Heart right ventricle (tissue), 16 donors: ENCODE measurements at regions of chr10 and their contacts with region 1.

Region 1: GRCh38 chr10:70758757-70759514 is 26.2 kb downstream of the TBATA start:
- DNase-seq: peak in 1 of 2 donors; percentile 85
- ATAC-seq: peak; percentile 20 to 78 (median 66)
- H3K4me3 ChIP-seq: no peak overlapping the region
- H3K27ac ChIP-seq: no peak overlapping the region
- H3K4me1 ChIP-seq: peaks cover 0 to 21% (median 13%) of the 10 kb centered on the region in 9 donors
- H3K27me3 ChIP-seq: no peaks in the 10 kb centered on the region
- CTCF ChIP-seq: peak; percentile 61 to 85 (median 77)

Region 2: DNA sequence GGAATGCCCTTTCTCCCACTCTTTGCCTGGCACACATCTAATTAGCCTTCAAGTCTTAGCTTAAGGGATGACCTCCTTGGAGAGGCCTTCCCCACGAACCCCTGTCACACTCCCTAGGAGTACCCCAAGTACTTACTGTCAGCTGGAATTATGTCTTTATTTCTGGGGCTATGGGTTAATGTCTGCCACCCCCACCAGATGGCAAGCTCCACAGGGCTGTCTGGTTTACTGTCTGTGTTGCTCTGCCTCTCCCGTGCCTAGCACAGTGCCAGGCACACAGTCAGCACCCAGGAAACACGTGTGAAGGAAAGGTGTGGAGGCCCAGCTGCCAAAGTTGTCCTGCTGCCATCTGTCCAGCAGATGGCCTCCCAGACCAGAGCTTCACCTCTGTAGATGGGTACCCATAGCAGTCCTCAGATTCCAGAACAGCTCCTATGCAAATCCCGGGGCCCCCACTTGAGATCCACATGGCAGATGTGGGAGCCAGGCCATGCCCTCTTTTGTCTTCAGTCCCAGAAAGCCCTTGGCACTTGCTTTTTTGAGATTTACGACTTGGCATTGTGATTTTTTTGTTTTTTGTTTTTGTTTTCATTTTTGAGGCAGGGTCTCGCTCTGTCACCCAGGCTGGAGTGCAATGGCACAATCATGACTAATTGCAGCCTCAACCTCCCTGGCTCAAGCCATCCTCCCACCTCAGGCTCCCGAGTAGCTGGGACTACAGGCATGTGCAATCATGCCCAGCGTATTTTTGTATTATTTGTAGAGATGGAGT is 297.5 kb before region 1 on chr10:
- intact Hi-C with region 1: loop called (anchors 2 to 10 kb)
- DNase-seq: peak; percentile 52 to 56
- ATAC-seq: peak; percentile 42 to 73 (median 54)
- H3K4me3 ChIP-seq: no peak overlapping the region
- H3K27ac ChIP-seq: peak overlapping the region in 1 of 10 donors; percentile 7
- H3K4me1 ChIP-seq: peaks cover 16 to 56% (median 37%) of the 10 kb centered on the region in 9 donors
- H3K27me3 ChIP-seq: peaks cover 0 to 34% (median 0%) of the 10 kb centered on the region in 7 donors
- CTCF ChIP-seq: peak; percentile 82 to 95 (median 88)

Region 3: DNA sequence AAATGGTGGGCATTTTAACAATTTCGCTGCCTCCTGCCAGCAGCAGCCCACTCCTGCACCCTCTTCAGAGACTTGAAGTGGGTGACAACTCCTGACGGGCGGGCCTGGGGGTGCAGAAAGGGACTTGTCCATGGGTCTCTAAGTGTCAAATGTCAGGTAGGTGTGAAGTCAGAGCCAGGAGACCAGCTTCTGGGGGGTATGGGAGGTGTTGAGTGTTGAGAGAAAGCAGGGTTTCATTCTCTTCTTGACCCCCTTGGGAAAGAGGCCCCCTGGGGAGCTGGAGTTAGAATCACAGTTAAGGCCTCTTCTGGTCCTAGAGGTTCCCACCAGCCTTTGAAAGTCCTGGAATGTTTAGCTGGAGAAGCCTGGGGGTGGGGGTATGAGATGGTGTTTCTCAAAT is 292.0 kb before region 1 on chr10:
- intact Hi-C with region 1: loop called in 9 of 10 experiments (anchors 2 to 10 kb)
- DNase-seq: no peak
- ATAC-seq: no peak
- H3K4me3 ChIP-seq: no peak overlapping the region
- H3K27ac ChIP-seq: no peak overlapping the region
- H3K4me1 ChIP-seq: peaks cover 12 to 34% (median 20%) of the 10 kb centered on the region in 9 donors
- H3K27me3 ChIP-seq: no peaks in the 10 kb centered on the region
- CTCF ChIP-seq: no peak

Region 4: GRCh38 chr10:70549962-70550458 is 208.9 kb before region 1 on chr10:
- intact Hi-C with region 1: loop called (anchors 1 to 5 kb)
- DNase-seq: peak; percentile 62 to 67
- ATAC-seq: peak; percentile 58 to 78 (median 70)
- H3K4me3 ChIP-seq: no peak overlapping the region
- H3K27ac ChIP-seq: no peak overlapping the region
- H3K4me1 ChIP-seq: peaks cover 0 to 24% (median 0%) of the 10 kb centered on the region in 9 donors
- H3K27me3 ChIP-seq: no peaks in the 10 kb centered on the region
- CTCF ChIP-seq: peak; percentile 85 to 97 (median 90)

Region 5: DNA sequence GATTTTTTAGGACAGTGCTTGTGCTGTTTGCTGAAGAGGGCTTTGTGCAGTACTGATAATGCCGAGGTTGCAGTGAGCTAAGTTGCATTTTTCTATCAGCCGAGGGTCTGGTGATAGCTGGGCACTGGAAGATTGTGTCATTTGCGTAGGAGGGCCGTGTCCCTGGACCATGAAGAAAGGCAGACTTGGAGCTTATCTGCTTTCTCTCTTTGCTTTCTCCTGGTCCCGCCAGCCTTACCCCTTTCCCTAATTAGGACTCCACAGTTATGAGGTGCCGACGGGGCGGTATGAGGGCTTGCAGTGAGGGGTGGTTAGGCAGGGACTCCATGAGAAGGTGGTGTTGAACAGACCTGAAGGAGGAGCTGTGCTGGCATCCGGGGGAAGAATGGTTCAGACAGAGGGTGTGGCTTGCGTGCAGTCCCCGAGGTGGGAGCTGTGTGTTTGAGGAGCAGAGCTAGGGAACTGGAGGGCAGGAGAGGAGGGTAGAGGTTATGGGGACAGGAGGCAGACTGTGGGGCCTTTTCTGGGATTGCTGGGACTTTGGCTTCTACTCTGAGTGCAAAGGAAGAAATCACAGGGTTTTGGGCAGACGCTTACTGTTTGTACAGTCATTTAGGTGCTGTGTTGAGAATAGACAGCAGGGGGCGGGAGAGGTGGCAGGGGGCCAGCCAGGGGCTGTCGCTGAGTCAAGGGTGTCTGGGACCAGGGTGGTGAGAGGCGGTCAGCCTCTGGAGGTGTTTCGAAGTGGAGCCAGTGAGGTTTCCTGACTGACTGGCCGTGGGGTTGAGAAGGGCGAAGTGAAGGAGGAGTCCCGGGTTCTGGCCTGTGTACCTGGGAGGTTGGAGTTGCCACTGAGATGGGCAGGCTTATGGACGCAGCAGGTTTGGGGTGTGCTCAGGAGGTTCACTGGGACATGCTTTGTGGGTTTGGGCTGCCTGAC is 199.8 kb before region 1 on chr10:
- intact Hi-C with region 1: loop called in 1 of 10 experiments (anchors 2 kb)
- DNase-seq: peak; percentile 75
- ATAC-seq: peak; percentile 49 to 82 (median 76)
- H3K4me3 ChIP-seq: peak overlapping the region in 5 of 10 donors; percentile 2 to 32 (median 18)
- H3K27ac ChIP-seq: peak overlapping the region in 8 of 10 donors; percentile 39 to 75 (median 54)
- H3K4me1 ChIP-seq: peaks cover 7 to 51% (median 43%) of the 10 kb centered on the region in 9 donors
- H3K27me3 ChIP-seq: no peaks in the 10 kb centered on the region
- CTCF ChIP-seq: peak; percentile 33 to 71 (median 59)

Region 6: DNA sequence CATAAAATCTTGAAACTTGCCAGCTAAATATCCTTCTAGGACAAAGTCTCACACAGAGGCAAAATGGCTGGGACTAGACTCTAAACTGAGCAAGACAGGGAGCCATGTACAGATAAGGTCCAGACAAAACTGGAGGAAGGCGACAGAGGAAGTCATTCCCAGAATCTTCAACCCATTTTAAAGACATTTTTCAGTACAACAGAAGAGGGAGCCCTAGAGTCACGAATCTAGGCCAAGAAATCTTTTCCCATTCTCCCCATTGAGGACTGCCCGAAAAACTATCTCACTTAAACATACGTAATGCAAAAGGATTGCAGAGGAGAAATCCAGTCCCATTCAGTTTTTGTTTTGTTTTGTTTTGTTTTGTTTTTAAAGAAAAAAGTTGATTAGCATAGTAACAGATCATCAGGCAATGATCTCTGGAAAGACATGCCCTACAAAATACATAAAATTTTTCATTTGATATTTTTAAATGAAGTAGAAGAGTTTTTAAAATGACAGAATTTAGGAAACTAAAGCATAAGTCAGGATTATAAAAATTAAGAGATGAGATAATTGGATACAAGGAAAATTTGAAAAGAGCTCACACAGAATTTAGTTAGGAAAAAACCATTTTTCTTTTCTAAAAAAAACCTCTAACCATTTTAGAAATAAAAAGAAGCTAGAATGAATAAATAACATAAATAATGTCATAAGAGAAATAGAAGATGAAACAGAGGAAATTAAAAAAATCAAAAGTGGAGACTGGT is 139.5 kb before region 1 on chr10:
- intact Hi-C with region 1: loop called in 4 of 10 experiments (anchors 2 to 10 kb)
- DNase-seq: no peak
- ATAC-seq: no peak
- H3K4me3 ChIP-seq: no peak overlapping the region
- H3K27ac ChIP-seq: no peak overlapping the region
- H3K4me1 ChIP-seq: peaks cover 0 to 14% (median 0%) of the 10 kb centered on the region in 9 donors
- H3K27me3 ChIP-seq: no peaks in the 10 kb centered on the region
- CTCF ChIP-seq: peak in 6 of 9 donors; percentile 27 to 54 (median 32)

Region 7: DNA sequence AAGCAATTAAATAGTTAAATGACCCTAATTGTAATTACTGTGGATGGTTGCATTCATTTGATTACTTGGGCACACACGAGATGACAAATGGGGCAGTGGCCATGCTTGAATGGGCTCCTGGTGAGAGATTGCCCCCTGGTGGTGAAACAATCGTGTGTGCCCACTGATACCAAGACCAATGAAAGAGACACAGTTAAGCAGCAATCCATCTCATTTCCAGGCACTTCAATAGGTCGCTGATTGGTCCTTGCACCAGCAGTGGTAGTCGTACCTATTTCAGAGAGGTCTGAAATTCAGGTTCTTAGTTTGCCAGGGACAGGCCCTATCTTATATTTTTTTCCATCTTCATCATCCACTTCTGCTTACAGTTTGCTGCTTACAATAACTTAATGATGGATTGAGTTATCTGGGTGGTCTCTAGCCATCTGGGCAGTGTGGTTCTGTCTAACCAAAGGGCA is 121.2 kb after region 1 on chr10:
- intact Hi-C with region 1: loop called in 4 of 10 experiments (anchors 5 kb)
- DNase-seq: peak; percentile 55 to 83
- ATAC-seq: peak; percentile 70 to 86 (median 79)
- H3K4me3 ChIP-seq: no peak overlapping the region
- H3K27ac ChIP-seq: no peak overlapping the region
- H3K4me1 ChIP-seq: peaks cover 0 to 9% (median 0%) of the 10 kb centered on the region in 9 donors
- H3K27me3 ChIP-seq: no peaks in the 10 kb centered on the region
- CTCF ChIP-seq: peak; percentile 77 to 96 (median 93)